ENCODE measurements at regions of chr2 and their contacts with region 1.

Region 1: GRCh38 chr2:11344342-11344955 is at the start of gene ROCK2:
- DNase-seq: peak; percentile 90 to 93
- ATAC-seq: peak; percentile 72 to 82 (median 76)
- H3K4me3 ChIP-seq: peak within 1 kb of the TSS; percentile 96
- H3K27ac ChIP-seq: peak within 1 kb of the TSS; percentile 98
- H3K4me1 ChIP-seq: peaks cover 29% of the 10 kb centered on the region
- H3K27me3 ChIP-seq: no peaks in the 10 kb centered on the region
- CTCF ChIP-seq: no peak
- total RNA-seq, gene ROCK2: 59.9 to 80.1 (median 62.4) TPM

Region 2: GRCh38 chr2:11234309-11234708 is 110.1 kb before region 1 on chr2:
- intact Hi-C with region 1: loop called (anchors 2 to 5 kb)
- DNase-seq: no peak
- ATAC-seq: peak; percentile 39 to 61 (median 56)
- H3K4me3 ChIP-seq: no peak overlapping the region
- H3K27ac ChIP-seq: no peak overlapping the region
- H3K4me1 ChIP-seq: peaks cover 38% of the 10 kb centered on the region
- H3K27me3 ChIP-seq: no peaks in the 10 kb centered on the region
- CTCF ChIP-seq: peak; percentile 63

Region 3: GRCh38 chr2:11239666-11240462 is 104.6 kb before region 1 on chr2:
- intact Hi-C with region 1: loop called (anchors 2 to 5 kb)
- DNase-seq: no peak
- ATAC-seq: peak; percentile 23 to 36 (median 28)
- H3K4me3 ChIP-seq: no peak overlapping the region
- H3K27ac ChIP-seq: no peak overlapping the region
- H3K4me1 ChIP-seq: peaks cover 27% of the 10 kb centered on the region
- H3K27me3 ChIP-seq: no peaks in the 10 kb centered on the region
- CTCF ChIP-seq: no peak

Region 4: GRCh38 chr2:11286749-11287148 is 57.7 kb before region 1 on chr2:
- intact Hi-C with region 1: loop called in 1 of 2 experiments (anchors 5 kb)
- DNase-seq: no peak
- ATAC-seq: peak; percentile 91 to 96 (median 93)
- H3K4me3 ChIP-seq: no peak overlapping the region
- H3K27ac ChIP-seq: peak overlapping the region; percentile 77
- H3K4me1 ChIP-seq: peaks cover 50% of the 10 kb centered on the region
- H3K27me3 ChIP-seq: no peaks in the 10 kb centered on the region
- CTCF ChIP-seq: no peak

Region 5: GRCh38 chr2:11411768-11412448 is 67.5 kb after region 1 on chr2:
- intact Hi-C with region 1: loop called (anchors 2 to 5 kb)
- DNase-seq: no peak
- ATAC-seq: peak in 2 of 4 donors; percentile 65 to 76
- H3K4me3 ChIP-seq: peak overlapping the region; percentile 62
- H3K27ac ChIP-seq: no peak overlapping the region
- H3K4me1 ChIP-seq: peaks cover 39% of the 10 kb centered on the region
- H3K27me3 ChIP-seq: no peaks in the 10 kb centered on the region
- CTCF ChIP-seq: peak; percentile 83

Measured in psoas muscle (tissue), 8 donors.